ENCODE measurements at regions of chr3 and their contacts with region 1.

Region 1: DNA sequence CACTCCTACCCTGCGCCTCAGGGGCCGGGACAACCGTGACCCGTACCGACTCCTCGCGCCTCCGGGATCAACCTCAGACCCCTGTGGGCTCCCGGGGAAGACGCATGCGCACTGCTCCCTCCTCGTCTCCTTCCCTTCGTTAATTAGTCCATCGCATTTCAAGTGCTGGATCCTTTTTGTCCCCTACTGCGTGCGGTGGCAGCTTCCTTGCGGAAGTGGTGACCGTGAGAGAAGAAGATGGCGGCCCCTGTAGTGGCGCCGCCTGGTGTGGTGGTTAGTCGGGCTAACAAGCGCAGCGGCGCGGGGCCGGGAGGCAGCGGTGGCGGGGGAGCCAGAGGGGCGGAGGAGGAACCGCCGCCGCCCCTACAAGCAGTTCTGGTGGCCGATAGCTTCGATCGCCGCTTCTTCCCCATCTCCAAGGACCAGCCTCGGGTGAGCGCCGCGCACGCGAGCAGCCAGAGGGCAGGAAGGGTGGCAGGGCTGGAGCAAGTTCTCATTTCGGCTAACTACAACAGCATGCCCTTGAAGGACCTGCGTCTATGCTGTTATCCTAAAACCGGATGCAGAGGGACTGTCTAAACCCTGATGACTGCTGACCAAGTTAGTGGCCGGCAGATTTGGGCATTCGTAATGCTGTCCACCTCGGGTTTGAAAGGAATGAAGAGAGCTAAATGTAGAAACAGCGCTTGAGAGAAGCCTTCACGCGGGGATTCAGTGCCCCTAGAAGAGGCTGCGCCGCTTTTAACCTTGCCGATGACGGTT is at the start of gene EIF2B5:
- DNase-seq: peak; percentile 92
- H3K4me3 ChIP-seq: peak within 1 kb of the TSS; percentile 97
- H3K27ac ChIP-seq: peak within 1 kb of the TSS; percentile 67
- H3K4me1 ChIP-seq: peaks cover 20% of the 10 kb centered on the region
- CTCF ChIP-seq: peak; percentile 65
- total RNA-seq, gene EIF2B5: 41.1 and 66.1 TPM in 2 replicates

Region 2: GRCh38 chr3:183895296-183895695 is 240.0 kb before region 1 on chr3:
- CTCF ChIA-PET with region 1: no interaction called
- POLR2A ChIA-PET with region 1: interaction called, 4 read pairs
- intact Hi-C with region 1: loop called (anchors 5 kb)
- DNase-seq: peak; percentile 72
- H3K4me3 ChIP-seq: no peak overlapping the region
- H3K27ac ChIP-seq: no peak overlapping the region
- H3K4me1 ChIP-seq: peaks cover 5% of the 10 kb centered on the region
- CTCF ChIP-seq: peak; percentile 92

Region 3: DNA sequence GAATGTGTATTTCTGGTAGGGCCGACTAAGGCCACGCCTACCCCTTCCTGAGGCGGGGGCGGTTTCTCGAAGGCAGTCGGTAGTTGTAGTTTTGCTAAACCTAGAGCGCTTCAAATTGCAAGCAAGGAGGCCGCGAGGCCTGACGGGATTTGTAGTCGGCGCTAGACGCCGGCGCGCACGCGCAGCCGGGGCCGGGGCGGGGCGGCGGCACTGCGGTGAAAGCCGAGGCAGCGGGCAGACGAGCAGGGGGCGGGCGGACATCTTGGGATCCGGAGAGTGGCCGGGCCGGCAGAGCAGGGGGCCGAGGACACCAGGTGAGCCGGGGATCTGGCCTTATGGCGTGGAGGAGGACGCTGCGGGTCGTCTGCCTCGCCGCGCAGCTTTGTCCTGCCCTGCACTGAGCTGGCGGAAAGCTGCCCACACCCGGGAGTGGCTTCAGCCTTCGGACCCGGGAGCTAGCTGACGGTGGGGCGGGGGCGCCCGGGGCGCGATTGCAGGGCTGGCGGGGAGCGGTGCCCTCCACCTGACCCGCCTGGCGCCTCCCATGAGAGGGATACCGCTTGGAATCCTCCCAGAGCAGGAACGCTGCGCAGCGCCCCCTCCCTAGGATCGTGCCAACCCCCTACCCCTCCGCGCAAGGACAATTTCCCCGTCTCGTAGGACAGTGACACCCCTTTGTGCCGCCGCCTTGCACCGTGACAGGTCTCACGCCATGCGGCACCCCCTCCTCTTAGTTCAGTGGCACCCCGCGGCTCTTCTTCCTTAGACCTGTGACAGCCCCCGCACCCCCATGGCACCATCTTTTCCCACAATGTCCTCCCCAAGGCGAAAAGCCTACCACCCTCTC is 39.5 kb after region 1 on chr3 and contains the start of gene AP2M1:
- CTCF ChIA-PET with region 1: no interaction called
- POLR2A ChIA-PET with region 1: no interaction called
- intact Hi-C with region 1: loop called (anchors 1 kb)
- DNase-seq: peak; percentile 99
- H3K4me3 ChIP-seq: peak within 1 kb of the TSS; percentile 94
- H3K27ac ChIP-seq: peak within 1 kb of the TSS; percentile 29
- H3K4me1 ChIP-seq: peaks cover 26% of the 10 kb centered on the region
- CTCF ChIP-seq: 0 out of 2 replicates have a peak, but pooled peaks have one; percentile 37
- total RNA-seq, gene AP2M1: 141 and 147 TPM in 2 replicates

Region 4: GRCh38 chr3:184250167-184250828 is 115.0 kb after region 1 on chr3:
- CTCF ChIA-PET with region 1: no interaction called
- POLR2A ChIA-PET with region 1: interaction called, 3 read pairs
- intact Hi-C with region 1: loop called (anchors 2 kb)
- DNase-seq: peak; percentile 94
- H3K4me3 ChIP-seq: peak overlapping the region; percentile 81
- H3K27ac ChIP-seq: peak overlapping the region; percentile 83
- H3K4me1 ChIP-seq: peaks cover 8% of the 10 kb centered on the region
- CTCF ChIP-seq: peak; percentile 96

Region 5: GRCh38 chr3:184362668-184363540 is 227.6 kb after region 1 on chr3:
- CTCF ChIA-PET with region 1: no interaction called
- POLR2A ChIA-PET with region 1: no interaction called
- intact Hi-C with region 1: loop called (anchors 5 kb)
- DNase-seq: peak; percentile 99
- H3K4me3 ChIP-seq: peak overlapping the region; percentile 97
- H3K27ac ChIP-seq: peak overlapping the region; percentile 55
- H3K4me1 ChIP-seq: peaks cover 23% of the 10 kb centered on the region
- CTCF ChIP-seq: peak; percentile 76